CD4-positive, alpha-beta T cell (primary cell): ENCODE measurements at regions of chr2 and their contacts with region 1.

Region 1: DNA sequence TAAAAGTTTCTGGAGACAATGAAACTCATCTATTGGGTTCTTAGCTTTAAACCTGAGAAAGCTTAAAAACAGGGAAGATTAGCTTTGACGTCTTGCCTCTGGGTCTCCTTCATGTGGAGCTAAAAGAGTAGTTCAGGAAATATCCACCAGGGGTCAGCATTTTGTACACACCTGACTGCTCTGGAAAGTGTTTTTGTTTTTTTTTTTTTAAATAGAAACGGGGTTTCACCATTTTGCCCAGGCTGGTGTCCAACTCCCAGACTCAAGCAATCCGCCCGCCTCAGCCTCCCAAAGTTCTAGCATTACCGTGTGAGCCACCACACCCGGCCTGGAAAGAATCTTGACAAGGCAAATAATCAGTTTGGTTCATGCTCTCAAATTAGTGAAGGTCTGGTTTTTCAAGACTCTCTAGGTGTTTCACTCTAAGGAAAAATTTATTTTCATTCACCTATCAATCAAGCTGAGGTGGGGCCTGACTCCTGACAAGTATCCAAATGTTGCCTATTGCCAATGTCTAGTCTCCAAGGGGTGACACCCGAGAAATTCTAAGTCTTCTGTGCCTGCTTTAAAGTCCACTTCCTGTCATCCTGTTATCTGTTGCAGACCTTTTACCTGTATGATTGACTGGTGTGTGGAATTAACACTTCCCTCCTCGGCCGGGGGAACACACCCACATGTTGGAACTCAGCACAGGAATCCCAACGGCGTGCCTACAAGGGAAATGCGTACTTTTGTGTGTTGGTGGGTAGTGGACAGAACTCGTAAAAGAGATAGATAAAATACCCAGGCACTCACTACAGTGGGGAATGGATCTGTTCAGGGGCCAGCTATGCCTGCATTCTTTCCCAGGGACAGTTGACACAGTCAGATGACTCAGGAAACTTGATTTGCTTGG is 11.3 kb downstream of the IL1RN start:
- DNase-seq: peak in 10 of 14 experiments; percentile 13 to 91 (median 47)
- ATAC-seq: peak; percentile 86
- H3K4me3 ChIP-seq: no peak overlapping the region
- H3K4me3 Mint-ChIP-seq: peak overlapping the region; percentile 59
- H3K27ac ChIP-seq: no peak overlapping the region
- H3K27ac Mint-ChIP-seq: peak overlapping the region; percentile 62
- H3K4me1 ChIP-seq: peaks cover 10% of the 10 kb centered on the region
- H3K4me1 Mint-ChIP-seq: peaks cover 23% of the 10 kb centered on the region
- H3K27me3 ChIP-seq: no peaks in the 10 kb centered on the region
- H3K27me3 Mint-ChIP-seq: no peaks in the 10 kb centered on the region
- CTCF ChIP-seq: peak; percentile 95

Region 2: GRCh38 chr2:113157118-113157896 is 18.6 kb after region 1 on chr2:
- CTCF ChIA-PET with region 1: interaction called, 17 read pairs
- POLR2A ChIA-PET with region 1: interaction called, 9 read pairs
- intact Hi-C with region 1: loop called (anchors 2 kb)
- DNase-seq: peak in 9 of 14 experiments; percentile 33 to 71 (median 55)
- ATAC-seq: peak; percentile 86
- H3K4me3 ChIP-seq: peak overlapping the region; percentile 79
- H3K4me3 Mint-ChIP-seq: peak overlapping the region; percentile 96
- H3K27ac ChIP-seq: peak overlapping the region in 1 of 2 donors; percentile 11
- H3K27ac Mint-ChIP-seq: peak overlapping the region; percentile 92
- H3K4me1 ChIP-seq: peaks cover 19% of the 10 kb centered on the region
- H3K4me1 Mint-ChIP-seq: peaks cover 41% of the 10 kb centered on the region
- H3K27me3 ChIP-seq: no peaks in the 10 kb centered on the region
- H3K27me3 Mint-ChIP-seq: no peaks in the 10 kb centered on the region
- CTCF ChIP-seq: no peak

Region 3: GRCh38 chr2:113173542-113174395 is 35.1 kb after region 1 on chr2 and contains the start of gene PSD4:
- CTCF ChIA-PET with region 1: interaction called, 39 read pairs
- POLR2A ChIA-PET with region 1: interaction called, 34 read pairs
- intact Hi-C with region 1: no loop called
- DNase-seq: peak; percentile 72 to 95 (median 85)
- ATAC-seq: peak; percentile 82
- H3K4me3 ChIP-seq: peak within 1 kb of the TSS; percentile 86
- H3K4me3 Mint-ChIP-seq: peak within 1 kb of the TSS; percentile 92
- H3K27ac ChIP-seq: peak within 1 kb of the TSS; percentile 62 to 88
- H3K27ac Mint-ChIP-seq: peak within 1 kb of the TSS; percentile 93
- H3K4me1 ChIP-seq: peaks cover 99% of the 10 kb centered on the region
- H3K4me1 Mint-ChIP-seq: peaks cover 76% of the 10 kb centered on the region
- H3K27me3 ChIP-seq: no peaks in the 10 kb centered on the region
- H3K27me3 Mint-ChIP-seq: peaks cover 5% of the 10 kb centered on the region
- CTCF ChIP-seq: no peak
- total RNA-seq, gene PSD4: 96.5 to 101 TPM

Region 4: DNA sequence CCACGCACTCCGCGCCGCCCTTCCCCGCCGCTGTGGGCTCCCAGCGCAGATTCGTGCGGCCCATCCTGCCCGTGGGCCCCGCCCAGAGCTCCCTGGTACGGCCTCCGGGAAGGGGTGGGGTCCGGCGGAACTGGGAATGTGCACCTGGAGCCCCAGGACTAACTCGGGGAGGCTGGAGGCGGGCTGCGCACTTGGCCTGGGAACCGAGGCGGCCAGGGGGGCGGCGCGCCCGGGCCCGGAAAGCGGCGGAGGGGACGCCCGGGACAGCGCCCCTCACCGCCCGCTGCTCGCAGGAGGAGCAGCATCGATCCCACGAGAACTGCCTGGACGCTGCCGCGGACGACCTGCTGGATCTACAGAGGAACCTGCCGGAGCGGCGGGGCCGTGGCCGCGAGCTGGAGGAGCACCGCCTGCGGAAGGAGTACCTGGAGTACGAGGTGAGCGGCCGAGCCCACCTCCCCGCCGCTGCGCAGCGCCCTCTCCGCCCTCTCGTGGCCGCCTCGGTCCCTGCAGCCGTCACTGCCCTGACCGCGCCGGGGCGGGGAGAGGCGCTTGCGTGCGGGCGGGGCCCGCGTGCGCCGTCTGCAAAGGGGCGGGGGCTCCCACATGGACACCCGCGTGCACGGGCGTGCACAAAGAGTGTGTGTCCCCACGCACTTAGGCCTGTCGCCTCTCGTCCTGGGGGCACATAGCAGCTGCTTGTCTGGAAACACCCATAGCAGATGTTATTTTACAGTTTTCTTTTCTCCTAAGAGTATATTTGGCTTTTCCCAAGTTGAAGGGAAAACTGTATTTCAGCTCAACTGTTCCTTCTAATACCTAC is 60.3 kb after region 1 on chr2:
- CTCF ChIA-PET with region 1: interaction called, 41 read pairs
- POLR2A ChIA-PET with region 1: interaction called, 14 read pairs
- intact Hi-C with region 1: loop called (anchors 1 kb)
- DNase-seq: peak; percentile 53 to 87 (median 75)
- ATAC-seq: peak; percentile 71
- H3K4me3 ChIP-seq: no peak overlapping the region
- H3K4me3 Mint-ChIP-seq: no peak overlapping the region
- H3K27ac ChIP-seq: peak overlapping the region in 1 of 2 donors; percentile 5
- H3K27ac Mint-ChIP-seq: peak overlapping the region; percentile 12
- H3K4me1 ChIP-seq: peaks cover 9% of the 10 kb centered on the region
- H3K4me1 Mint-ChIP-seq: peaks cover 8% of the 10 kb centered on the region
- H3K27me3 ChIP-seq: no peaks in the 10 kb centered on the region
- H3K27me3 Mint-ChIP-seq: no peaks in the 10 kb centered on the region
- CTCF ChIP-seq: peak; percentile 91

Region 5: DNA sequence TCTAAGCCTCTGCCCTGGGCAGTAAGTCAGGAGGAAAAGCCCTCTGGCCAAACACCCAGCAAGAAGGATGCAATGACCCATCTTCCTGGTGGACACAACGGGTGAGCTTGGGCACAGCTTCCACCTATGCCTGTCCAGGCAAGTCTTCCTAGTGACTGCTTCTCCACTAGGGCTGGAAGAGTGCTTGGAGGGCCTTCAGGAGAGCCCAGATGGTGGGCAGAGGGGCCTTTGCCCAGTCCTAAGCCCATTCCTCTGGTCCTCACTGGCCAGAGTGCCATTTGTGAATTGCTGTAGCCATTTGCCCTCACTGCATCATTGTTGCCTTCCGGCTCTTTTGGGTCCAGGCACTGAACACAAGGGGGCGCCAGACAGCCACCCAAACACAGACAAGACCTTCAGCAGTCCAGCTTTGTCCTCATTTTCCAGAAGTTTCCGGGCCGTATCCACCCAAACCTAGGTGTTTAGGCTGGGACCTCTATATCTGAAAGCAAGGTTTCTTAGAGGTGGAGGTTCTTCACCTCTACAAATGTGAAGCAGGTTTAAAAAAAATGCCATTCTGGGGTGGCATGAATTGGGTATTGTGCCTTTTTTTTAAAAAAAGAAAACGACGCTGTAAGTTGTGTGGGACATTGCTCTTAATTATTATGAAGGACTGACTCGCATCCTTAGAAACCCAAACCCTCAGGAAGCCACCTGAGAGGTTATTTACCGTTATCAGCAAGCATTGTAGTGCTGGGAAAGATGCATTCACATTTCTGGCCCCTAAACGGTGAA is 110.5 kb after region 1 on chr2:
- CTCF ChIA-PET with region 1: interaction called, 8 read pairs
- POLR2A ChIA-PET with region 1: interaction called, 5 read pairs
- intact Hi-C with region 1: loop called (anchors 1 to 2 kb)
- DNase-seq: peak; percentile 51 to 88 (median 68)
- ATAC-seq: peak; percentile 54
- H3K4me3 ChIP-seq: no peak overlapping the region
- H3K4me3 Mint-ChIP-seq: peak overlapping the region; percentile 17
- H3K27ac ChIP-seq: no peak overlapping the region
- H3K27ac Mint-ChIP-seq: peak overlapping the region; percentile 80
- H3K4me1 ChIP-seq: peaks cover 40% of the 10 kb centered on the region
- H3K4me1 Mint-ChIP-seq: peaks cover 53% of the 10 kb centered on the region
- H3K27me3 ChIP-seq: no peaks in the 10 kb centered on the region
- H3K27me3 Mint-ChIP-seq: no peaks in the 10 kb centered on the region
- CTCF ChIP-seq: peak; percentile 96

Region 6: DNA sequence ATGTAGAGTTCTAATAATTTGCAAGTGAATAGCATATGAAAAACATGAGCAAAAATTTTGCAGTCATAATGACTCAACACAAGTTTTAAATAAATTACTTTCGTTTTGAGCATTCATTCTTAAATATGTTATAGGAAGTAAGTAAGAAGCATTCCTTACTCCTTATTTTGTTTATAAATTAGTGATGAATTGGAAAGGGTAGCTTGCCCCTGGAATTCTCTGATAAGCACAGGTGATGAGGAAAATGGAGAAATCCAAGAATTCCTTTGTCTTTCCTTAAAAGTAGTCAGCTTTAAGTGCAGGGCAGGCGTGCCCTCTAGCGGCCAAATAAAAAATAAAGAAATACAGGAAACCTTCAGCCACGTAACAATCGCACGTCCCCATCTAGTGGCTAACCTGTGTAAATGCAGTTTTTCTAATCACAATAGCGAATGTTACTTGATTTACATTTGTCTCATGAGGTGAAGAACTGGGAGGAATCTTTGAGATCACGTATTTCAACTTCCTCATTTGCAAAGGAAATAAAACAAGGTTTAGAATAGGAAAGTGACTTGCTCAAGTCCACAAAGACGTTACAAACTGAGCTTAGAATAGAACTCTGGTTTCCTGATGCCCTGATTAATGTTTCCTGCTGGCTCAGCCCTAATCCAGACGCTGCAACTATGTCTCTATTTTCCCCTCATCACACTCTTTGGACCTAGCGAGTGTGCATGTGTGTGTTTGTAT is 251.6 kb after region 1 on chr2:
- CTCF ChIA-PET with region 1: interaction called, 15 read pairs
- POLR2A ChIA-PET with region 1: no interaction called
- intact Hi-C with region 1: loop called (anchors 2 to 5 kb)
- DNase-seq: peak; percentile 11 to 88 (median 43)
- ATAC-seq: peak; percentile 97
- H3K4me3 ChIP-seq: peak overlapping the region; percentile 51
- H3K4me3 Mint-ChIP-seq: peak overlapping the region; percentile 83
- H3K27ac ChIP-seq: no peak overlapping the region
- H3K27ac Mint-ChIP-seq: peak overlapping the region; percentile 68
- H3K4me1 ChIP-seq: peaks cover 4% of the 10 kb centered on the region
- H3K4me1 Mint-ChIP-seq: peaks cover 10% of the 10 kb centered on the region
- H3K27me3 ChIP-seq: no peaks in the 10 kb centered on the region
- H3K27me3 Mint-ChIP-seq: no peaks in the 10 kb centered on the region
- CTCF ChIP-seq: peak; percentile 100